Spleen (tissue), 13 donors: ENCODE measurements at regions of chr4 and their contacts with region 1.

Region 1: DNA sequence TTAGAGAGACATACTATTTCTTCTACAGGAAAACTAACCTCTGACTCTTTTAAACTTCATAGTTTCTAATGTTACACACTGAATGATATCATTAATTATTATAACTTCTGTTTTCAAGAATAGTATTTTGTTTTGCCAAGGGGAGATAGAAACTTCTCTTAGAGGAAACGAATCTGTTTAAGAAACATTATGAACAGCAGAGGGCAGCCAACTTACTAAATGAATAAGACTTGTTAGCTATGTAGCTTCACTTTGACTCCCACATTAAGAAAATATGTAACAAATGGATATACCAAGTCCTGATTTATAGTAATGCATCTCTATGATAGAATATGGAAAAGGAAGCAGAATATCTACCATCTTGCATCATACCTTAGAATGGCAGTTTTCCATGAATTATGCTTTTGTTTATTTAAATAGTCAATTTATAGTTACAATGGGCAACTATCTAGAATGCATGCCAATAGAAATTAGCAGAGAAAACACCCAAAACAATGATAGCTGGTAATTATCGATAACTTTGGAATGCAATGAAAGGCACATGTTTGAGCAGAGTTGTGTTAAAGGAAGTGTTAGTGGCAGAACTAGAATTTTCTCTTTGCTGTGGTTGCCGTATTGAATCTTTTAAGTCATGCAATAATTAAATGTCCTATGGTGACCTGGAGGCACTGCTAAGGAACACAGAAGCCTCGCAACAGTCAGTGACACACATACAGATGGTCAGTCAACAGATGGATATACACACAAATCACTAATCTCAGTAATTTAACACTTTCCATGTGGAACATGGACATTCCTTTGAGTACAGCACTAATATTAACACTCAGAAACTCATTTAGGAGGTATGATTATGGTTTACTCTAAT is 105.7 kb upstream of the PDLIM3 start:
- DNase-seq: no peak
- H3K4me3 ChIP-seq: no peak overlapping the region
- H3K27ac ChIP-seq: no peak overlapping the region
- H3K4me1 ChIP-seq: peaks cover 0 to 4% (median 0%) of the 10 kb centered on the region in 6 donors
- H3K27me3 ChIP-seq: peaks cover 0 to 26% (median 10%) of the 10 kb centered on the region in 7 donors
- CTCF ChIP-seq: peak in 8 of 11 experiments; percentile 15 to 59 (median 42)
- POLR2A ChIP-seq: no peak

Region 2: GRCh38 chr4:185332575-185333464 is 308.2 kb before region 1 on chr4:
- intact Hi-C with region 1: no loop called
- DNase-seq: no peak
- H3K4me3 ChIP-seq: no peak overlapping the region
- H3K27ac ChIP-seq: no peak overlapping the region
- H3K4me1 ChIP-seq: peaks cover 0 to 6% (median 0%) of the 10 kb centered on the region in 6 donors
- H3K27me3 ChIP-seq: no peaks in the 10 kb centered on the region
- CTCF ChIP-seq: no peak
- POLR2A ChIP-seq: no peak

Region 3: DNA sequence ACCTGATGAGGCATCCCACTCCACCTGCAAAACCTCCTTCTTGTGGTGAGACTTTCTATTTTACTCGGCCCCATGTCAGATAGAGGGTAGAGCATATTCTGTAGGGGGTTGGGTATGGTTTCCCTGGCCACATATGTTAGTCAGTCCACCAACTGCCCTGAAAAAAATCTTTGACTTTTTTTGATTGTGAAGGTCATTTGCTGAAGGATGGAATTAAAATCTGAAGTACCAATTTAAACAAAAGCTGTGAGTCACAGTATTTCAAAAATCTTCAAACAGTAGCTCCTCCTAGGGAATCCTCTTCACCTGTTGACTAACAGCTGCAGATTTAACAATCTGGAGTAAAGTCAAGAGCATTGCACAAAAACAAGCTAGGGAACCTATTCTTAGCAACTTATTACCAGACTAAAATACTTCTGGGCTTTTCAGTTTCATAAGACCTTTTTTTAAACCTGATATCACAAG is 161.5 kb before region 1 on chr4:
- intact Hi-C with region 1: no loop called
- DNase-seq: no peak
- H3K4me3 ChIP-seq: no peak overlapping the region
- H3K27ac ChIP-seq: peak overlapping the region in 1 of 8 donors; percentile 32
- H3K4me1 ChIP-seq: no peaks in the 10 kb centered on the region
- H3K27me3 ChIP-seq: peaks cover 0 to 22% (median 0%) of the 10 kb centered on the region in 7 donors
- CTCF ChIP-seq: no peak
- POLR2A ChIP-seq: no peak

Region 4: GRCh38 chr4:186021461-186022167 is 380.6 kb after region 1 on chr4:
- intact Hi-C with region 1: loop called (anchors 5 kb)
- DNase-seq: no peak
- H3K4me3 ChIP-seq: peak overlapping the region in 2 of 8 donors; percentile 6 to 46
- H3K27ac ChIP-seq: peak overlapping the region in 5 of 8 donors; percentile 1 to 38 (median 18)
- H3K4me1 ChIP-seq: peaks cover 0 to 14% (median 1%) of the 10 kb centered on the region in 6 donors
- H3K27me3 ChIP-seq: peaks cover 0 to 16% (median 0%) of the 10 kb centered on the region in 7 donors
- CTCF ChIP-seq: peak in 10 of 11 experiments; percentile 15 to 65 (median 37)
- POLR2A ChIP-seq: no peak

Region 5: DNA sequence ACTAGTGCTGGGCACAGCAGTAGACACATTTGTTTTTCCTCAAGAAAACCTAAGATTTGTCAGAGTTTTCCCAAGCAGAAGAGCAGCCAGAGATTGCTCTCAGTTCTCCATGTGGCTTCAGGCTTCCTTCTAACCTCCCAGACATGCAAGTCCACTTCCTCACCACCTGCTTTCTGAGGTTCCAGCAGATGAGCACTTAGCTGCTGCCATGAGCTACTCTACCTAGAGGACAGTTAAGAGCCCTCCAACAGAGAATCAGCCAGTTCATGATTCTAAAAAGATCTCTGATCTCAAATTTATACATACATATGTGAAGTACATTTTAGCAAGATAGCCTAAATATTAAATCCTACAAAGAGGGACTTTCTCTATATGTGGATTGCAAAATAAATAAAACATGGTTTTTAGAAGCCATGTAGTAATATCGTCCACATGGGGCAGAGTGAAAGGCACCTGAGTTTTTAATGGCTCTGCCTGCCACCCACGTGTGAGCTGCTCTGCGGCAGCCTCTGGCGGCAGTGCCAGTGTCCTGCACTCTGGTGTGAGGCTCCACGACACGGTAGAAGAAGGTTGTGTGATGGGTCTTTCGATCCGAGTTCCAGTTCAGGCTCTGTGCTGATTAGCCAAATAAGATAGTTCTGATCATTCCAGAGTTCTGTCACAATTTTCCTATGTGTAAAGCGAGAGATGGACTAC is 560.6 kb after region 1 on chr4:
- intact Hi-C with region 1: no loop called
- DNase-seq: peak; percentile 87
- H3K4me3 ChIP-seq: no peak overlapping the region
- H3K27ac ChIP-seq: peak overlapping the region in 3 of 8 donors; percentile 11 to 53 (median 33)
- H3K4me1 ChIP-seq: peaks cover 0 to 35% (median 9%) of the 10 kb centered on the region in 6 donors
- H3K27me3 ChIP-seq: no peaks in the 10 kb centered on the region
- CTCF ChIP-seq: peak; percentile 34 to 79 (median 62)
- POLR2A ChIP-seq: no peak